Activated CD8-positive, alpha-beta T cell treated with anti-CD3 and anti-CD28 coated beads for 36 hours (primary cell): ENCODE measurements at regions of chr12 and their contacts with region 1.

Region 1: GRCh38 chr12:54214553-54215406 is 26.0 kb upstream of the SMUG1 start:
- DNase-seq: peak; percentile 95
- ATAC-seq: peak; percentile 88
- H3K4me3 Mint-ChIP-seq: peak overlapping the region; percentile 76
- H3K27ac Mint-ChIP-seq: no peak overlapping the region
- H3K4me1 Mint-ChIP-seq: peaks cover 21% of the 10 kb centered on the region
- H3K27me3 Mint-ChIP-seq: peaks cover 20% of the 10 kb centered on the region
- CTCF ChIP-seq: peak; percentile 100

Region 2: GRCh38 chr12:54005853-54006686 is 208.7 kb before region 1 on chr12:
- CTCF ChIA-PET with region 1: interaction called, 34 read pairs
- POLR2A ChIA-PET with region 1: no interaction called
- intact Hi-C with region 1: no loop called
- DNase-seq: peak; percentile 90
- ATAC-seq: peak; percentile 83
- H3K4me3 Mint-ChIP-seq: peak overlapping the region; percentile 41
- H3K27ac Mint-ChIP-seq: no peak overlapping the region
- H3K4me1 Mint-ChIP-seq: peaks cover 20% of the 10 kb centered on the region
- H3K27me3 Mint-ChIP-seq: peaks cover 84% of the 10 kb centered on the region
- CTCF ChIP-seq: peak; percentile 94

Region 3: GRCh38 chr12:54191550-54192022 is 23.2 kb before region 1 on chr12:
- CTCF ChIA-PET with region 1: interaction called, 40 read pairs
- POLR2A ChIA-PET with region 1: no interaction called
- intact Hi-C with region 1: no loop called
- DNase-seq: peak; percentile 87
- ATAC-seq: peak; percentile 60
- H3K4me3 Mint-ChIP-seq: no peak overlapping the region
- H3K27ac Mint-ChIP-seq: no peak overlapping the region
- H3K4me1 Mint-ChIP-seq: peaks cover 18% of the 10 kb centered on the region
- H3K27me3 Mint-ChIP-seq: peaks cover 38% of the 10 kb centered on the region
- CTCF ChIP-seq: peak; percentile 74

Region 4: GRCh38 chr12:54229624-54230212 is 14.9 kb after region 1 on chr12:
- CTCF ChIA-PET with region 1: interaction called, 19 read pairs
- POLR2A ChIA-PET with region 1: interaction called, 3 read pairs
- intact Hi-C with region 1: no loop called
- DNase-seq: no peak
- ATAC-seq: no peak
- H3K4me3 Mint-ChIP-seq: no peak overlapping the region
- H3K27ac Mint-ChIP-seq: no peak overlapping the region
- H3K4me1 Mint-ChIP-seq: no peaks in the 10 kb centered on the region
- H3K27me3 Mint-ChIP-seq: no peaks in the 10 kb centered on the region
- CTCF ChIP-seq: no peak